Calu3 (cell line): ENCODE measurements at regions of chr3 and their contacts with region 1.

Region 1: DNA sequence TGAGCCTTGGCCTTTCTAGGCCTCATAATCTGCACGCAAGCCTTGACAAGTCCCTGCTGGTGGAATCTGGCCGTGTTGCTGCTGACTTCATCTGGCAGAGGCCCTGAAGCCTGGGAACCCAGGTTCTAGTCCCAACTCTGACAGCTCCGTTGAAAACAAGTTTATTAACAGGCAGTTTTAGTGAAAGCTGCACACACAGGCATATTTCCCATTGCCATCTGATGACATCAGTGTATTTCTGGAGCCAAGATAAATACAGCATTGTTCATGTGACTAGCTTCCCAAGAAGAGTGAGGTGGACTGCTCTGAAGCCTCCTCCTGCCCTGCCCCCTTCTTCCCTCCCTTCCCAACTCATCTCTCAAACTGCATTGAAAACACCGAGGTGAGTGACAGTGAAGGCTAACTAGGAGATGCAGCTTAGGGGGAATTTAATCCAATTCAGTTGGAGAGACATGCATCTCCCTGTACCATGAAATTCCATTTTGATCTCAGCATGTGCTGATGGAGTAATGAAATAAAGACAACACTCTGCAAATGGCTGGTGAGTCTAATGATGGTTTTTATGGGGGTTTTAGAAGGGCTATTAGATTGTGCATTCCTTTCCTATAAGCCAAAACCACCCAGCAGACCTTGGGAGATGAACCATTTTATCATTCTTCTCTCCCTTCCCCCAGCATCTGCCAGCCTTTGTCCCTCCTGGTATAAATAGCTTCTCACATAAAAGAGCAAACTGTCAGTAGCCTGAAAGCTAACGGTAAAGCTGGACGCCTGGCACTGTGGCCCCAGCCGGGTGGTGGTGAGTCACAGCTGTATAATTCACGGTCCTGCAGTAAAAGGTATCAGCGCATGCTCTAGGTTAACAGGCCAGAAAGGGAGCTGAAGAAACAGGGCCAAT is 38.0 kb downstream of the PRICKLE2 start:
- DNase-seq: peak; percentile 71
- H3K4me3 Mint-ChIP-seq: no peak overlapping the region
- H3K27ac Mint-ChIP-seq: peak overlapping the region; percentile 73
- H3K4me1 Mint-ChIP-seq: peaks cover 46% of the 10 kb centered on the region
- H3K27me3 Mint-ChIP-seq: no peaks in the 10 kb centered on the region
- CTCF ChIP-seq: no peak

Region 2: GRCh38 chr3:63779201-63779600 is 408.1 kb before region 1 on chr3:
- CTCF ChIA-PET with region 1: no interaction called
- intact Hi-C with region 1: no loop called
- DNase-seq: no peak
- H3K4me3 Mint-ChIP-seq: no peak overlapping the region
- H3K27ac Mint-ChIP-seq: no peak overlapping the region
- H3K4me1 Mint-ChIP-seq: no peaks in the 10 kb centered on the region
- H3K27me3 Mint-ChIP-seq: no peaks in the 10 kb centered on the region
- CTCF ChIP-seq: no peak

Region 3: DNA sequence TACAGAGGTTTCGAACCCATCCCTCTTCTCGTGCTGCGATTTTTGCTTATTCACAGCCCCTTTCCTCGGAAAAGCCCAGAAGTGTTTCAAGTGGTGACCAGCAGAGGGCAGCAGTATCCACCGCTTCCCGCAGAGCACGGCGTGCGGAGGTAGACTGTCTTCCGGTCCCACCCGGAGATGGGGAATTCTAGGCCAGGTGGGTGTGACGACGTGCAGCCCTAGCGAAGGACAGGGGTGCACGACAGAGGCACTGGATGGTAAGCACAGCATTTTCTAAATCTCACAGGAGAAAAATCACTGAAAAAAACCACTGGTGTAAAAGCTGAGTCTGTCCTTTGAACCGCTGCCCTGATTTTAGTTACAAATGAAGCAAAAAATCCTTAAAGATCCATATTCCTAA is 156.6 kb before region 1 on chr3:
- CTCF ChIA-PET with region 1: no interaction called
- intact Hi-C with region 1: loop called (anchors 10 kb)
- DNase-seq: peak; percentile 81
- H3K4me3 Mint-ChIP-seq: peak overlapping the region; percentile 49
- H3K27ac Mint-ChIP-seq: no peak overlapping the region
- H3K4me1 Mint-ChIP-seq: peaks cover 10% of the 10 kb centered on the region
- H3K27me3 Mint-ChIP-seq: peaks cover 36% of the 10 kb centered on the region
- CTCF ChIP-seq: peak; percentile 86

Region 4: GRCh38 chr3:64111868-64112267 is 75.4 kb before region 1 on chr3:
- CTCF ChIA-PET with region 1: no interaction called
- intact Hi-C with region 1: no loop called
- DNase-seq: no peak
- H3K4me3 Mint-ChIP-seq: no peak overlapping the region
- H3K27ac Mint-ChIP-seq: no peak overlapping the region
- H3K4me1 Mint-ChIP-seq: no peaks in the 10 kb centered on the region
- H3K27me3 Mint-ChIP-seq: peaks cover 45% of the 10 kb centered on the region
- CTCF ChIP-seq: no peak

Region 5: DNA sequence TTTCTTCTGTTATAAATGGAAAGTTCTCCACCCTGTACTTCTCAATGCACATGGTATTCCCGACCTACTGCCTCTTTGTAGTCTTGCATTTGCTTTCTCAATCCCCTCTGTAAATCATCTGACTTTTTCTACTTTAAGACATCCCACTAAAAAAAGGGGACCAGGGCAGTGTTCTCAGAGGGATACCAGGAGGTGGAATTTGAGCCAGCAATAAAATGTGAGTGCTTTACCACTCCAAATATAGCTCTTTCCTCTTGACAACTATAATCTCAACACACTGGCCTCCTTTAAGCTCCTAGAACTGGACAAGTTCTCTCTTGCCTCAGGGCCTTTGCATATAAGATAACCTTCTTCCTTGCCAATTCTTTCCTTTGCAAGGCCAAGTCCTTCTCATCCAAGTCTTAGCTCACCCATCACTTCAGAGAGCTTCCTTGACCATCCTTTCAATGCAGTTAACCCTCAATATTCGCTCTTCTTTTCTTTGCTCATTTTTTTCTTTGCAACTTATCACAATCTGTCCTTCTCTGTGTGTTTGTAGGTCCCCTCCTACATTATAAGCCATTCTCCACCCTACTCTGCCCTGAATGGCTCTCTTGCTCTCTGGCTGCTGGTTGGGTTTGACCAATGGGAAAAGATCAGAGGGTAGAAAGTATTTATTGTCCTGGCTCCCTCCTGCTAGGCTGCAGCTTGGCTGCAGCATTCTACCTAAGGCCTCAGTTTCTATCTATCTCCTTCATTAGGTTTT is 55.4 kb before region 1 on chr3:
- CTCF ChIA-PET with region 1: no interaction called
- intact Hi-C with region 1: no loop called
- DNase-seq: no peak
- H3K4me3 Mint-ChIP-seq: no peak overlapping the region
- H3K27ac Mint-ChIP-seq: no peak overlapping the region
- H3K4me1 Mint-ChIP-seq: no peaks in the 10 kb centered on the region
- H3K27me3 Mint-ChIP-seq: no peaks in the 10 kb centered on the region
- CTCF ChIP-seq: no peak

Region 6: DNA sequence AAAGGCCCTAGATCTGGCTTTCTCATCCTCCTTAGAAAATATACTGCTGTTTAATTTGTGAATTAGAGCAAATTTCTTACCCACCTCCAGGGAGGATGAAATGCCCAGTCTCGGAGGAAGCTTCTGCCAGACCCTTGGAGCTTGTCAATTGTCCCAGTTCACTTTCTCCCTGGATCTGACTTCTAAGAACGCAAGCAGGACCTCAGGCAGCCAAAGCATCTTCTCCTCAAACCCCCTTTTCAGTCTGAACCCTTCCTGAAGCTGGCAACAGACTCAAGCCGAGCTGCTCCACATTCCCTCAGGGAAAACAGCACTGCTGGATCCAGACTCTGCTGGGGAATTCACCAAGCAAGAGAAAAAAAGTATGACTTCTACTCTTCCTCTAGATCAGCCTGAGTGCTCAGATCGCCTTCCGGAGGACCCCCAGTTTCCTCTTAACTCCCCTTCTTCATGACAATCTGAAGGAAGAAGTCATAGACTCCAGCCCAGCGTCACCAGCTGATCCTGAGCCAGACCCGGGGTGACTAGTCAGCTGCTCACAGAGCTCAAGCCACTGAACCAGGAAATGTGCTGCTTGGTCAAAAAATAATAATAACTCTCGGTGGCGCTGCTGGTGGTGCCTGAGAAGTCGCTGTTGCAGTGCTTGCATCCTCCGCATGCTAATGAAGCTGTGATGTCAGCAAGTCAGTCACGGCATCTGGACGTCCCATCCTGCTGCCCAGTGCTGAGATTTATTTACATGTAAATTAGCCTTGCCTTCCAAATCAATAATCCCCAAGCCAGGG is 37.7 kb after region 1 on chr3 and contains the start of gene PRICKLE2:
- CTCF ChIA-PET with region 1: interaction called, 4 read pairs
- intact Hi-C with region 1: loop called (anchors 1 kb)
- DNase-seq: peak; percentile 73
- H3K4me3 Mint-ChIP-seq: peak within 1 kb of the TSS; percentile 65
- H3K27ac Mint-ChIP-seq: peak within 1 kb of the TSS; percentile 88
- H3K4me1 Mint-ChIP-seq: peaks cover 31% of the 10 kb centered on the region
- H3K27me3 Mint-ChIP-seq: no peaks in the 10 kb centered on the region
- CTCF ChIP-seq: no peak
- total RNA-seq, gene PRICKLE2: 1.9 and 4.0 TPM in 2 replicates

Region 7: GRCh38 chr3:64484289-64484992 is 297.1 kb after region 1 on chr3:
- CTCF ChIA-PET with region 1: no interaction called
- intact Hi-C with region 1: loop called (anchors 10 kb)
- DNase-seq: peak; percentile 83
- H3K4me3 Mint-ChIP-seq: no peak overlapping the region
- H3K27ac Mint-ChIP-seq: no peak overlapping the region
- H3K4me1 Mint-ChIP-seq: no peaks in the 10 kb centered on the region
- H3K27me3 Mint-ChIP-seq: peaks cover 25% of the 10 kb centered on the region
- CTCF ChIP-seq: peak; percentile 78